Heart right ventricle (tissue), 16 donors: ENCODE measurements at regions of chr12 and their contacts with region 1.

Region 1: GRCh38 chr12:72346363-72346944 is 74.3 kb downstream of the TRHDE start:
- DNase-seq: peak in 1 of 2 donors; percentile 20
- ATAC-seq: peak in 1 of 8 donors; percentile 63
- H3K4me3 ChIP-seq: no peak overlapping the region
- H3K27ac ChIP-seq: no peak overlapping the region
- H3K4me1 ChIP-seq: no peaks in the 10 kb centered on the region
- H3K27me3 ChIP-seq: peaks cover 0 to 3% (median 0%) of the 10 kb centered on the region in 7 donors
- CTCF ChIP-seq: peak in 7 of 9 donors; percentile 35 to 53 (median 42)

Region 2: DNA sequence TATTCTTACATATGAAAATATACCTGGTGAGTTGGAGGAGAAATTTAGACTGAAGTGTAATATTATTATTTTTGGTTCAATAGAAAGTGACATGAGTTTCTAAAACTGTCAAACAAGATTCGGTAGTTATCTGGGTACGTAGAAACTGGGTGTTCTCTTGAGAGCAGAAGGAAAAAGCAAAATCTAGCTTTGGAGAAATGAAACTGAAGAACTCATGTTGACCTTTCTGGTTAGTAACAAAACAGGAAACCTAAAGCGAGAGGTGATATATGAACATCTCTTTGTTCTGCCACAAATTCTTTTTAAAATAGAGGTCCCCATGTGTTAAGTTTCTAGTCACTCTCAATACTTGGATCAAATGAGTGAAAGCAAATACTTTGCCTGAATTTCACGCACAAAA is 327.4 kb after region 1 on chr12:
- intact Hi-C with region 1: loop called in 1 of 10 experiments (anchors 5 kb)
- DNase-seq: no peak
- ATAC-seq: no peak
- H3K4me3 ChIP-seq: no peak overlapping the region
- H3K27ac ChIP-seq: no peak overlapping the region
- H3K4me1 ChIP-seq: no peaks in the 10 kb centered on the region
- H3K27me3 ChIP-seq: no peaks in the 10 kb centered on the region
- CTCF ChIP-seq: no peak